ENCODE measurements at regions of chr18 and their contacts with region 1.

Region 1: GRCh38 chr18:11947214-11948191 is 33.8 kb upstream of the IMPA2 start:
- DNase-seq: peak; percentile 92 to 94
- ATAC-seq: peak; percentile 96 to 99 (median 98)
- H3K4me3 ChIP-seq: peak overlapping the region; percentile 23 to 75 (median 59)
- H3K27ac ChIP-seq: peak overlapping the region; percentile 76 to 99 (median 97)
- H3K4me1 ChIP-seq: peaks cover 0 to 24% (median 15%) of the 10 kb centered on the region in 9 donors
- H3K27me3 ChIP-seq: no peaks in the 10 kb centered on the region
- CTCF ChIP-seq: peak in 3 of 9 donors; percentile 6 to 15 (median 8)

Region 2: GRCh38 chr18:11980555-11981382 is 33.3 kb after region 1 on chr18:
- intact Hi-C with region 1: loop called in 8 of 10 experiments (anchors 1 to 5 kb)
- DNase-seq: peak; percentile 96 to 99
- ATAC-seq: peak; percentile 89 to 97 (median 94)
- H3K4me3 ChIP-seq: peak overlapping the region; percentile 77 to 95 (median 88)
- H3K27ac ChIP-seq: peak overlapping the region; percentile 93 to 98 (median 96)
- H3K4me1 ChIP-seq: peaks cover 0 to 51% (median 31%) of the 10 kb centered on the region in 9 donors
- H3K27me3 ChIP-seq: no peaks in the 10 kb centered on the region
- CTCF ChIP-seq: peak in 4 of 9 donors; percentile 11 to 46 (median 44)